H1 (cell line): ENCODE measurements at regions of chr16 and their contacts with region 1.

Region 1: DNA sequence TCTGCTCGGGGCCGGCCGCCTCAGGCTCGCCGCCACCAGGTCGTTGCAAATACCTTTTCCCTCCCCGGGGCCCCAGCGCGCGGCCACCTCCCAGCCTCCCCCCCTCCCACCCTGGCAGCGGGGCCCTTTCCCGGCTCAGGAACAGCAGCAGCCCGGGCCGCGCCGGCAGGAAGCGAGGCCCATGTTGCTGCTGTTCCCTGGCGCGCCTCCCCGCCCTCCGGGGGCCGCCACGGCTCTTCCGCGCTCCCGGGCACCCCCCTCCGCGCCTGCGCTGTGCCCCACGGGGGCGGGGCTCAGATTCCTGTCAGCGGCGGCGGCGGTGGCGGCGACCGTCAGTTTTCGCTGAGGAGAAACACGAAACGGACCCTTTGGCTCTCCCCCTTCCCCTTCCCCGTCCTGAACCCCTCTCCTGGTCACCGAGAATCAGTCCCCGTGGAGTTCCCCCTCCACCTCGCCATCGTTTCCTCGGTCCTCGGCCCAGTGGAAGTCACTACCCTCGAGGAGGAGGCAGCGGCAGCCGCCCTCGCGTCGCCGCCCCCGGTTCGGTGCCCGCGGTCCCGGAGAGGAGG is at the start of gene NFAT5:
- DNase-seq: peak; percentile 53 to 98
- H3K4me3 ChIP-seq: peak within 1 kb of the TSS; percentile 68 to 97 (median 90)
- H3K27ac ChIP-seq: peak within 1 kb of the TSS; percentile 79
- H3K4me1 ChIP-seq: peaks cover 0 to 8% (median 7%) of the 10 kb centered on the region in 4 experiments; a peak in 5 of 7 replicates
- H3K27me3 ChIP-seq: no peaks in the 10 kb centered on the region
- CTCF ChIP-seq: peak in 1 of 3 experiments; percentile 17; a peak in 1 of 4 replicates
- EP300 ChIP-seq: peak; percentile 83 to 100; a peak in 2 of 3 replicates
- POLR2A ChIP-seq: peak; percentile 49 to 59; a peak in 1 of 3 replicates
- RAD21 ChIP-seq: peak in 1 of 2 experiments; percentile 15; a peak in 2 of 4 replicates
- total RNA-seq, gene NFAT5: 25.4 and 29.0 TPM in 2 replicates

Region 2: DNA sequence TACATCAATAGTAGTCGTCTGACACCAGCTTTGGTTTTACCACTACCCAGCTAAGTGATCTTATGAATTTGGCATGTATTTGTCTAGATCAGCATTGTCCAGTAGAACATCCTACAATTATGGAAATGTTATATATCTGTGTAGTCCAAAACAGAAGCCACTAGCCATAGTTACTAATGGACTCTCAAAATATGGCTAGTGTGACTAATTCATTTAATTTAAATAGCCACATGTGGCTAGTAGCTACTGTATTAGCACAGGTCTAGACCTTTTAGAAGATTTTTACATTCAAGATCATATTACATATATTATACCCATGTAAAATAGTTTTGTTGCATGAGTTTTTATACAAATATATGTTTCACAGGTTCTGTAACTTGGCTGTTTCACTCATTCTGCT is 26.9 kb before region 1 on chr16:
- CTCF ChIA-PET with region 1: no interaction called
- POLR2A ChIA-PET with region 1: no interaction called
- DNase-seq: no peak
- H3K4me3 ChIP-seq: no peak overlapping the region
- H3K27ac ChIP-seq: no peak overlapping the region
- H3K4me1 ChIP-seq: 0 out of 7 replicates have a peak, but pooled peaks cover 0 to 3% (median 0%) of the 10 kb centered on the region in 4 experiments
- H3K27me3 ChIP-seq: no peaks in the 10 kb centered on the region
- CTCF ChIP-seq: no peak
- EP300 ChIP-seq: no peak
- POLR2A ChIP-seq: no peak
- RAD21 ChIP-seq: no peak

Region 3: DNA sequence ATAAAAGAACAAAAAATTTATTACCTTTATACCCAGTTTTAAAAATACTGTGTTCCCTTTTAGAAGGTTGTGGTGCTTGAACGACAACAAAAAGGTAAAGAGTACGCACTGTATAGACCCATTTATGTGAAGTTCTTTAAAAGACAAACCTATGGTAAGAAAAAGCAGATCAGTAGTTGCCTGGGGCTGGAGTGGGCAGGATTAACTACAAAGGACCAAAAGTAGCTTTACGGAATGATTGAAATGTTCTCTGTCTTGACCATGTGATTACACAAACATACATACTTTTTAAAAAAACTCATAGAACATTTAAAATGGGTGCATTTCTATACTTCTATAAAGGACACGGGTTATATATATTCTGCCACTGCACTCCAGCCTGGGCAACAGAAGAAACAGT is 11.7 kb after region 1 on chr16:
- CTCF ChIA-PET with region 1: interaction called, 5 read pairs
- POLR2A ChIA-PET with region 1: interaction called, 18 read pairs
- DNase-seq: no peak
- H3K4me3 ChIP-seq: no peak overlapping the region
- H3K27ac ChIP-seq: no peak overlapping the region
- H3K4me1 ChIP-seq: no peaks in the 10 kb centered on the region
- H3K27me3 ChIP-seq: no peaks in the 10 kb centered on the region
- CTCF ChIP-seq: no peak
- EP300 ChIP-seq: no peak
- POLR2A ChIP-seq: no peak
- RAD21 ChIP-seq: no peak